ENCODE measurements at regions of chr1 and their contacts with region 1.

Region 1: GRCh38 chr1:44571712-44572571 is 102.3 kb downstream of the TMEM53 start:
- DNase-seq: no peak
- H3K4me3 ChIP-seq: no peak overlapping the region
- H3K27ac ChIP-seq: no peak overlapping the region
- H3K4me1 ChIP-seq: peaks cover 18% of the 10 kb centered on the region
- H3K27me3 ChIP-seq: no peaks in the 10 kb centered on the region
- CTCF ChIP-seq: peak; percentile 76

Region 2: GRCh38 chr1:44390277-44390676 is 181.7 kb before region 1 on chr1:
- CTCF ChIA-PET with region 1: interaction called, 3 read pairs
- POLR2A ChIA-PET with region 1: no interaction called
- intact Hi-C with region 1: loop called (anchors 1 kb)
- DNase-seq: peak; percentile 41 to 75
- H3K4me3 ChIP-seq: no peak overlapping the region
- H3K27ac ChIP-seq: no peak overlapping the region
- H3K4me1 ChIP-seq: peaks cover 14% of the 10 kb centered on the region; the same call in 1 of the 2 replicates
- H3K27me3 ChIP-seq: no peaks in the 10 kb centered on the region
- CTCF ChIP-seq: no peak